ENCODE measurements at regions of chr20 and their contacts with region 1.

Region 1: DNA sequence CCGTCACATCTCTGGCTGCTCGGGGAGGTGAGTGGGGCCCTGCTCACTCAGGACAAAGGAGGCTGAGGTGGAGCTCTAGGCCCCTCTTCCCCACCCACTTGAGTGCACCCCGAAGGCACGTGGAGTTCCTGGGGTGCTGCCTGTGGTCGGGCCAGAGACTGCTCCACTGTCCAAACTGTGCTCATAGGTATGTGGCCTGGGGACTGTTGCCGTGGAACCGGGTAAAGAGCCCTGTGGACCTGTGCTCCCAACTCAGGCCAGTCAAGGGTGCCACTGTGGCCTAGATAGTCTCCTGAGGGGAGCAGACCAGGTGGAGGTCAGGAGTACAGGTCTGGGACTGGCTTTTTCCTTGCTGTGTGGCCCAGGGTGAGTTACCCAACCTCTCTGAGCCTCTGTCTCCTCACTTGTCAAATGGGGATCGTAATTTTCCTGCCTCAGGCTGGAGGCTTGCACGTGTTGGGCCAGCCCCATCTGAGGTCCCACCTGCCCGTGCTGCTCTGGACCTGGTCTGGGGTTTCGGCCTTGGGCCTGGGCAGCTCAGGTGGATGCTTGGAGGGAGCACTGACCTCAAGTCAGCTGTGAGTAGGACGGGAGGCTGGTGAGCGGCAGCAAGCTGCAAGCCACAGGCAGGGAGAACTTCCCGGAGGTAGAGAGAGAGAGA is 12.4 kb upstream of the NPBWR2 start:
- DNase-seq: no peak
- ATAC-seq: peak; percentile 37
- H3K4me3 ChIP-seq: peak overlapping the region; percentile 58
- H3K27ac ChIP-seq: no peak overlapping the region
- H3K4me1 ChIP-seq: no peaks in the 10 kb centered on the region; the same call in 1 of the 2 replicates
- H3K27me3 ChIP-seq: peaks cover 19% of the 10 kb centered on the region
- CTCF ChIP-seq: no peak

Region 2: GRCh38 chr20:63973636-63974402 is 146.0 kb before region 1 on chr20:
- CTCF ChIA-PET with region 1: no interaction called
- POLR2A ChIA-PET with region 1: interaction called, 10 read pairs
- intact Hi-C with region 1: no loop called
- DNase-seq: peak; percentile 84
- ATAC-seq: peak; percentile 67
- H3K4me3 ChIP-seq: peak overlapping the region; percentile 30; the same call in 1 of the 2 replicates
- H3K27ac ChIP-seq: no peak overlapping the region
- H3K4me1 ChIP-seq: peaks cover 17% of the 10 kb centered on the region
- H3K27me3 ChIP-seq: no peaks in the 10 kb centered on the region
- CTCF ChIP-seq: peak; percentile 97

Region 3: DNA sequence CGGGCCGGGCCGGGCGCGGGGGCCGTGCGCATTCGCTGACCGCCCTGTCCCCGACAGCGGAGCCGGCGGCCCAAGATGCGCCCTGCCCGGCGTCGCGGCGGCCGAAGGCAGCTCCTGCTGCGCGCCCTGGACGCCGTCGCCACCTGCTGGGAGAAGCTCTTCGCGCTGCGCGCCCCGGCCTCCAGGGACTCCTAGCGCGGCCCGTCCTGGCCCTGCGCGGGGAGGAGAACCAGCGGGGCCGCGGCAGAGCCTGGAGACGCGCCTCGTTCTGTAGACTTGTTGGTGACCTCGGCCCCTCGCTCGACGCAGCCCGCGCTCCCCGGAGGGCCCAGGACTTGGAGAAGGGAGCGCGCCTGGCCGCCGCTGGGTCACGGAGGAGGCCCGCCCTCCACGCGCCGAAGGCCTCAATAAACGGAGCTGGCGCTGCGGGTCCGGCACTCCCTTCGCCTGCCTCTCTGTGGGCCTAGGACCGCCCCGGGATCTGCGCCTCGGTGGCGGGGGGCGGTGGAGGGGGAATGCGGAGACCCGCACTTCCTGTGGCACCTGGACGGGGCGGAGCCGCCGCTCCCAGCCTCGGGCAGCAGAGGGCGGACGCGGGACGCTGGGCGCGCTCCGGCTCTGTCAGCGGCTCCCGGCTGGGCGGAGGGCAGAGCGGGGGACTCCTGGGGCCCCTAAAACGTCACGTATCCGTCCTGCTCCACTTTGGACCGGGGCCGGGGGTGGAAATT is 81.1 kb before region 1 on chr20:
- CTCF ChIA-PET with region 1: no interaction called
- POLR2A ChIA-PET with region 1: no interaction called
- intact Hi-C with region 1: loop called (anchors 1 kb)
- DNase-seq: peak; percentile 78
- ATAC-seq: peak; percentile 80
- H3K4me3 ChIP-seq: peak overlapping the region; percentile 71
- H3K27ac ChIP-seq: no peak overlapping the region
- H3K4me1 ChIP-seq: peaks cover 8% of the 10 kb centered on the region
- H3K27me3 ChIP-seq: no peaks in the 10 kb centered on the region
- CTCF ChIP-seq: peak; percentile 71

Region 4: GRCh38 chr20:64062596-64063388 is 57.0 kb before region 1 on chr20 and contains the start of gene TCEA2:
- CTCF ChIA-PET with region 1: no interaction called
- POLR2A ChIA-PET with region 1: no interaction called
- intact Hi-C with region 1: no loop called
- DNase-seq: peak; percentile 96
- ATAC-seq: peak; percentile 86
- H3K4me3 ChIP-seq: peak within 1 kb of the TSS; percentile 79
- H3K27ac ChIP-seq: peak within 1 kb of the TSS; percentile 73
- H3K4me1 ChIP-seq: peaks cover 46% of the 10 kb centered on the region
- H3K27me3 ChIP-seq: no peaks in the 10 kb centered on the region
- CTCF ChIP-seq: no peak
- total RNA-seq, gene TCEA2: 19.1 and 23.4 TPM in 2 replicates

Region 5: DNA sequence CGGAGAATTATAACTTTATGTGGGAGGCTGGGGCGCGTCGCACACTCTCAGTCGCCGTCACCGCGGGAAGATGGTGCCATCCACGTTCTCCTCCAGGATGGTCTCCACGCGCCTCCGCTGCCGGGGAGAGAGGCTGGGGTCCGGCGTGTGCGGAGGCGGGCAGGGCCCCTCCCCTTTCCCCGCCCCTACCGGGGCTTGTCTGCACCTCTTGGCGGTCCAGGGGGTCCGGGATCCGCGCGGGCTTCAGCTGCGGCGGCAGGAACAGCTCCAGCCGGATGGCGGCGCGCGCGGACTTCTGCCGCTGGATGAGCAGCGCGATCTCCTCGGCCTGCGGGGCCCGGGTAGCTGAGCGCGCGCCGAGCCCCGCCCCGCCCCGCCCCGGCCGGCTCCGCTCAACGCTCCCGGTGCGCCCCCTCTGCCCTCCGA is 36.4 kb before region 1 on chr20:
- CTCF ChIA-PET with region 1: interaction called, 15 read pairs
- POLR2A ChIA-PET with region 1: no interaction called
- intact Hi-C with region 1: loop called (anchors 1 kb)
- DNase-seq: peak; percentile 77
- ATAC-seq: peak; percentile 40
- H3K4me3 ChIP-seq: peak overlapping the region; percentile 76
- H3K27ac ChIP-seq: no peak overlapping the region
- H3K4me1 ChIP-seq: peaks cover 25% of the 10 kb centered on the region
- H3K27me3 ChIP-seq: no peaks in the 10 kb centered on the region
- CTCF ChIP-seq: peak; percentile 67

Region 6: GRCh38 chr20:64101731-64102621 is 17.8 kb before region 1 on chr20:
- CTCF ChIA-PET with region 1: interaction called, 15 read pairs
- POLR2A ChIA-PET with region 1: no interaction called
- intact Hi-C with region 1: loop called (anchors 1 kb)
- DNase-seq: peak; percentile 59
- ATAC-seq: peak; percentile 85
- H3K4me3 ChIP-seq: peak overlapping the region; percentile 64
- H3K27ac ChIP-seq: no peak overlapping the region
- H3K4me1 ChIP-seq: no peaks in the 10 kb centered on the region
- H3K27me3 ChIP-seq: 0 out of 2 replicates have a peak, but pooled peaks cover 7% of the 10 kb centered on the region
- CTCF ChIP-seq: peak; percentile 81